Activated T-helper 1 cell treated with anti-CD3 and anti-CD28 coated beads, Interleukin-12 subunit alpha, Interleukin-12 subunit beta, Interleukin-2, Interleukin-4 antibody, amounts not matched to agents 30 ng/mL and 10 ng/mL and 1 ng/mL, durations not matched to agents 14 hours and 24 hours and 36 hours (primary cell): ENCODE measurements at regions of chr7 and their contacts with region 1.

Region 1: GRCh38 chr7:26291699-26292538 is at the start of gene SNX10:
- DNase-seq: peak; percentile 63
- H3K4me3 Mint-ChIP-seq: peak within 1 kb of the TSS; percentile 92
- H3K27ac Mint-ChIP-seq: peak within 1 kb of the TSS; percentile 92
- H3K4me1 Mint-ChIP-seq: peaks cover 40% of the 10 kb centered on the region
- H3K27me3 Mint-ChIP-seq: no peaks in the 10 kb centered on the region
- total RNA-seq, gene SNX10: 41.9 and 48.3 TPM in 2 replicates

Region 2: DNA sequence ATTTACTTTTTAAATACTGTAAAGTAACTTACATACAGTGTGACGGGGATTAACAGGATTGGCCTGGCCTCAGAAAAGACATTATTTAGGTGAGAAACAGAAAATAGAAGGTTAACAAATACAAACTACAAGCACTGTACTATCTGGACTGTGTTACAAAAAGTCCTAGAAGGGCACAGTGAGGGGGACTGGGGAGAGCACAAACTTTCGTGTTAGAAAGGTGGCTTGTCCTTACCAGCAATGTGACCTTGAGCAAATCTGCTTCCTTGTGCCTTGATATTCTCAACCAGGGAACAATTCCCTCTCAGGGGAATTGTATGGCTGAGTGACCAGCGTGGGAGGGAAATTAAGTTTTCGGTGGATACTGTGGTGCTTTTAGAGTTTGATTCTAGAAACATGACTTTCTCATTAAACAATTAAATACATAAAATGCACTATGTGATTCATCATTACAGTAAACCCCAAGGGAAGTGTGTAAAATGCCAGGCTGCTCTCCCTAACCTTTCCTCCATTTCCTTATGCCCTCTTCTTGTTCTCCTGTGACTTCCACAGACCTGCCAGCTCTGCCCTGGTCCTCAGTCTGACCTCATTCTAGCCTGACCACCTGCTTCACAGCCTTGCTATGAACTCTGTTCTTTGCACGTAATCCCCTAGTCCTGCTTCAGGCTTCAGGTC is 1369.7 kb before region 1 on chr7:
- intact Hi-C with region 1: loop called (anchors 5 kb)
- DNase-seq: no peak
- H3K4me3 Mint-ChIP-seq: peak overlapping the region; percentile 3
- H3K27ac Mint-ChIP-seq: peak overlapping the region; percentile 91
- H3K4me1 Mint-ChIP-seq: peaks cover 95% of the 10 kb centered on the region
- H3K27me3 Mint-ChIP-seq: no peaks in the 10 kb centered on the region

Region 3: DNA sequence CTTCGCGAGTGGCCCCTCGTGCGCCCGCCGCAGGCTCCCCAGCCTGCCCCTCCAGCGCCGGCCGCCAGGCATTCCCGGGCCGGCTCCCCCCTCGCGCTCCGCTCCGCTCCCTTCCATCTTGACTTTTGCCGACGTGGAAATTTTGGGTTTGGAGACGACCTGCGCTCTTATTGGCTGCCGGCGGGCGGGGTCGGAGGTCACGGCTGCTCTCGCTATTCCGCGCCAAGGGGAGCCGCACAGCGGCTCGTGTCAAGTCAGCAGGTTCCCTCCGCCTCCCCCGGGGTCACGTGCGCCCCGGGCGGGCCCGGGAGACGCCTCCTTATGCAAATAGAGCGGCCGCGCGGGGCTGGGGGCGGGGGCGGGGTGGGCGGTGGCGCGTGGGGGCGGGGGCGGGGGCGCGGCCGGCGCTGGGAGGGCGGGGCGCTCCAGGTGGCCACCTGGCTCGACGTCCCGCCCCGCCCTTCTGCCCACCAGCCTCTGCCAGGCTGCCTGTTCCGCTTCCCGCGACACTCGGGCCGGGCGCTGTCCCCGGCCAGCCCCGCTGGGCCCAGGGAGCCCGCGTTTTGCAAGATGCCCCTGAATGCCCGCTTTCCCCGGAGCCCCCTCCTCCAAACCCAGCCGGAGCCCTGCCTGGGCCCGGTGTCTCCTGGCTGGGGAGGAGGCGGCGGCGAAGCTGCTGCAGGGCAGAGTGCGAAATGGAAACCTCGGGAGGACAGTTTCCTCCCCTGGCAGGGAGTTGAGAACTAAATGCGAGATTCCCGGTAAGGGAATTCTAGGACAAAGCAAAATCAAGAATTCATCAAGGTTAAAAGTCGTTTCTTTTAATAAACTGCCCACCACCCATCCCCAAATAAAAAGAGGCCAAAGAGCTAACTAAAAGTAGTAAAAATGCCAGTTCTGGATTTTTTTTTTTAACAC is 340.6 kb before region 1 on chr7:
- intact Hi-C with region 1: loop called (anchors 1 kb)
- DNase-seq: peak; percentile 87
- H3K4me3 Mint-ChIP-seq: peak overlapping the region; percentile 91
- H3K27ac Mint-ChIP-seq: peak overlapping the region; percentile 74
- H3K4me1 Mint-ChIP-seq: peaks cover 17% of the 10 kb centered on the region
- H3K27me3 Mint-ChIP-seq: peaks cover 5% of the 10 kb centered on the region

Region 4: DNA sequence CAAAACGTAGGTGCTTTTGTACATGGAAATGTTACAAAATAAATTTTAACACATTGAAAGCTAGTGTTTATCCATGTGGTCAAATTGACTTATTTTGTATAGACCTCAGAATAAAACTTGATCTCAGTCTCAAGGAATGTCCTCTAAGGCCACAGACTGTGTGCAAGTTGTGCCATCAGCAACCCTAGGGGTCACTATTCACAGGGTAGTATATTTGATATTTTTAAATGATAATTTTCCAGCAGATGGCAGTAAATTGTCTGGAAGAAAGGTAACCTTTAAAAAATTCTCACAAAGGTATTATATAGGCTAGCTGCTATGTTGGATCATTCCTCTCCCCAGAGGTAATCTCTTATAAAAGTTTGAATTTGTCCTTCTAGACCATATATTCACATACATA is 13.1 kb before region 1 on chr7:
- intact Hi-C with region 1: loop called (anchors 1 kb)
- DNase-seq: no peak
- H3K4me3 Mint-ChIP-seq: peak overlapping the region; percentile 47
- H3K27ac Mint-ChIP-seq: no peak overlapping the region
- H3K4me1 Mint-ChIP-seq: peaks cover 22% of the 10 kb centered on the region
- H3K27me3 Mint-ChIP-seq: peaks cover 3% of the 10 kb centered on the region

Region 5: GRCh38 chr7:26365077-26365900 is 73.4 kb after region 1 on chr7:
- intact Hi-C with region 1: loop called (anchors 1 kb)
- DNase-seq: peak; percentile 46
- H3K4me3 Mint-ChIP-seq: no peak overlapping the region
- H3K27ac Mint-ChIP-seq: peak overlapping the region; percentile 37
- H3K4me1 Mint-ChIP-seq: peaks cover 14% of the 10 kb centered on the region
- H3K27me3 Mint-ChIP-seq: no peaks in the 10 kb centered on the region

Region 6: DNA sequence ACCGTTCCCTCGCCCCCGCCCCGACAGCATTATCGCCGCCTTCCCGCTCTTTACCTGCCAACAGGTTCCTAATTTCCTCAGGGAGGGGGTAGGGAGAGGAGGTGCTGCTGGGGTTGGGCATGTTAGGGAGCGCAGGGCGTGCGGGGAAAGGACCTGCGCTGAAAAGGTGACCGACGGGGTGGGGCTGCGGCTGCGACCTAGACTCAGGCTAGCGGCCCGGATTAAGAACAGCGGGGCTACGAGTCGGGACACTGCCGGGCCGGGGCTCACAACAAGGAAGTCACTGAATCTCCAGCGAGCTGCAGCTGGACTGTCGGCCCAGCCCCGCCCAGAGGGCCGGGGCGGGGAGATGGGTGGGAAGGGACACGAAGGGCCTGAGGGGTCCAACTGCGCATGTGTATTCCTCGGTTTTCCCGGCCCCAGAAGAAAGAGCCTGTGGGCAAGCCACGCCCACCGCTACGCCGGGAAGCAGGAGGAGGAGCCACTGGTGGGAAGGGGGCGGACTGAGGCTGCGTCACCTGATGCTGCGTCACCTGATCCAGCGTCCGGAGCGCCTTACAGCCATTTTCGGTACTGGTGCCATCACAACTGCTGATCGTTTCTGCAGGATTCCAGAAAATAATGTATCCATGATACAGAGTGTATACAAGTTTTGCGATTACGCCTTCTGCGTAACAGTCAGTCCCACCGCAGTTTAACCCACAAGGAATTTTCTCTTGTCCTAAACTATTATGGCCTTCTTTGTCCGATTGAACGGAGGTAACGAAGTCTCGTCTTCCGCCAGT is 572.6 kb after region 1 on chr7 and contains the start of gene SKAP2:
- intact Hi-C with region 1: loop called (anchors 1 kb)
- DNase-seq: peak; percentile 83
- H3K4me3 Mint-ChIP-seq: peak within 1 kb of the TSS; percentile 93
- H3K27ac Mint-ChIP-seq: peak within 1 kb of the TSS; percentile 78
- H3K4me1 Mint-ChIP-seq: peaks cover 21% of the 10 kb centered on the region
- H3K27me3 Mint-ChIP-seq: peaks cover 29% of the 10 kb centered on the region
- total RNA-seq, gene SKAP2: 3.2 and 3.3 TPM in 2 replicates

Region 7: DNA sequence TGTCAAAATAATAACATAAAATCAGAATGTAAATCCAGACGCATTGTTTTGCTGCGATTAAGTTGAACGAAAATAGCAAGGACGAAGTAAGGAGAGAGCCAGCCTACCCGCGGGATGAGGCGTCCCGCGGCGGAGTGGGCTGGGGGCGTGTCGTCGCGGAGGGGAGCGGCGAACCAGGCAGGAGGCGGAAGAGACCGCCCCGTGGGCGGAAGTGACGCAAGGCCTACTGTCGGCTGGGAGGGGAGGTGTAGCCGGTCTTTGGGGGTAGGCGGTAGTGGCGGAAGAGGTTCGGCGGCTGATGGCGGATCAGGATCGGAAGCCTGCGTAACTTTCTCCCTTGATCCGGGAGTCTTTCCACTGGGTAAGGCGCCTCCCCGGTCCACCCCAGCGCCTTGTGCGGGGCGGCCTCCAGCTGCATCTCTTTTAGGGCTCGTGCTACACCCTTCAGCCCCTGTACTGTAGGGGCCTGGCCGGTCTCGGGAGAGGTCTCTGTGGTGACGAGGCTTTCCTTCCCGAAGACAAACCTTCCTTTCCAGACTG is 1448.1 kb after region 1 on chr7 and contains the start of gene TAX1BP1:
- intact Hi-C with region 1: loop called (anchors 2 kb)
- DNase-seq: peak; percentile 93
- H3K4me3 Mint-ChIP-seq: peak within 1 kb of the TSS; percentile 92
- H3K27ac Mint-ChIP-seq: peak within 1 kb of the TSS; percentile 98
- H3K4me1 Mint-ChIP-seq: peaks cover 41% of the 10 kb centered on the region
- H3K27me3 Mint-ChIP-seq: peaks cover 2% of the 10 kb centered on the region
- total RNA-seq, gene TAX1BP1: 88.6 and 90.9 TPM in 2 replicates